IMR-90 (cell line): ENCODE measurements at regions of chr14 and their contacts with region 1.

Region 1: DNA sequence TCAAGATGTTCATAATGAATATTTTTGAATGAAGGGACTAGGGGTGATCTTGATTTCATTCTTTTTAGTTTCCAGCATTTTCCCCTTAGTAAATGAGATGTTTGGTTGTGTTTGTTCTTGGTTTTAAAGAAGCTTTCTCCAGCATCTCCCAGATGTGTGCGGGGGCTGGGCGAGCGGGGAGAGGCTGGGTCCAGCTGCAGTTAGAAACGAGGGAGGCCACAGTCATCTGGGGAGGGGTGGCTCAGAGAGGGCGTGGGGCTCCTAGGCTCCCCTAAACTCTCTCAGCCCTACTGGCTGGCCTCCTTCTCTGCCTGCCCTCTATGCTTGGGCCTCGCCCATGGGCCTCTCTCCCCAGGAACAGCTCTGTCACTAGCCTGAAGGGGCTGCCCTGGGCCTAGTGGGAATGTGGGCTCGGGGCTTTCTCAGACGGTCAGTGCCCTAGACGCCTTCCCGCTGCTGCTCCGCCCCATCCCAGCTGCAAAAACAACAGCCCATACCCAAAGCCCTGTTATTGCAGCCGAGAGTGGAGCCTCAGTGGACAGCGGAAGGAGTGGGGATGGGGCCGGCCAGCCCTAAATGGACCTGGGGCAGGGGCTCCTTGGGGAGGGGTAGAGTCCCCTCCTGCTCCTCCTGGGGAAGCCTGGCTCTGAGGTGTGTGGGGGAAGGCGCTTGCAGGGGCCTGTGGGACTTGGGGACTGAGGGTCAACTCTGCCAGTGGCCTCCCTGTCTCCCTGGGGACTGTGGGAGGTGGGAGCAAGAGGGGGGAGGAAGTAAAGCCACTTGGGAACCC is 18.3 kb upstream of the EIF2B2 start:
- DNase-seq: no peak
- ATAC-seq: no peak
- H3K4me3 ChIP-seq: no peak overlapping the region
- H3K27ac ChIP-seq: no peak overlapping the region
- H3K4me1 ChIP-seq: peaks cover 17% of the 10 kb centered on the region
- H3K27me3 ChIP-seq: no peaks in the 10 kb centered on the region
- CTCF ChIP-seq: no peak
- POLR2A ChIP-seq: no peak
- RAD21 ChIP-seq: no peak

Region 2: DNA sequence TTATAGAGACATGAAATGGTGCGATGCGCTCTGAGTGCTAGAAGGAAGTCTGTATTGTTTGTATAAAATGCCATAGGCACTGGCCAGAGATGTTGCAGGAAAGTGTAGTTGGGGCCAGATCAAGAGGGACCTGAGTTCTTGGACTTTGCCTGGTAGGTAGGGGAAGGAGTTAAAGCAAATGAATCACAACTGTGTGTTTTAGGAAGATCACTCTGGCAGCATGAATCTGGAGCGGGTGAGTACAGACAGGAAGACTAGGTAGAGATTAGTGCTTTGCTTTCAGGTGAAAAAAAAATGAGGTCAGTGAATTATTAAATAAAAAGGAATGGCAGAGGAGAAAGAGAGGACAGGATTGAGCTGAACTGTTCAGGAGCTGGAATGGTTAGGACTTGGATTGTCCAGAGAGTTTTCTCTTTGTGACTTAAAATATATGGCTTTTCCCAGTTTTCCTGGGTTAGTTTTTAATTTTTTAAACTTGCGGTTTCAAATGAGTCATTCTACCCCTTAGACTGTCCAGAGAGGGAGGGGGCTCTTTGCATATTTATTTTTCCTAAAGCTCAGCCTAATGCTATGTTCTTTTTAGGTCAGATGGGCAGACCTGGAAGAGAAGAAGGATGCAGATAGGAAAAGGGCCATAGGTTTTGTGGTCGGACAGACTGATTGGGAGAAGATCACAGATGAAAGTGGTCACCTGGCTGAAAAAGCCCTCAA is 149.6 kb before region 1 on chr14:
- CTCF ChIA-PET with region 1: no interaction called
- POLR2A ChIA-PET with region 1: no interaction called
- dilution Hi-C with region 1: no loop called
- in situ Hi-C with region 1: no loop called
- intact Hi-C with region 1: no loop called
- DNase-seq: peak; percentile 65
- ATAC-seq: peak; percentile 81
- H3K4me3 ChIP-seq: no peak overlapping the region
- H3K27ac ChIP-seq: peak overlapping the region; percentile 86; the same call in 1 of the 2 replicates
- H3K4me1 ChIP-seq: peaks cover 18% of the 10 kb centered on the region
- H3K27me3 ChIP-seq: no peaks in the 10 kb centered on the region
- CTCF ChIP-seq: no peak
- POLR2A ChIP-seq: no peak
- RAD21 ChIP-seq: no peak

Region 3: GRCh38 chr14:74852927-74853514 is 131.4 kb before region 1 on chr14:
- CTCF ChIA-PET with region 1: no interaction called
- POLR2A ChIA-PET with region 1: no interaction called
- dilution Hi-C with region 1: no loop called
- in situ Hi-C with region 1: no loop called
- intact Hi-C with region 1: no loop called
- DNase-seq: peak; percentile 84
- ATAC-seq: peak; percentile 84
- H3K4me3 ChIP-seq: no peak overlapping the region
- H3K27ac ChIP-seq: peak overlapping the region; percentile 98; the same call in 1 of the 2 replicates
- H3K4me1 ChIP-seq: peaks cover 26% of the 10 kb centered on the region
- H3K27me3 ChIP-seq: no peaks in the 10 kb centered on the region
- CTCF ChIP-seq: no peak
- POLR2A ChIP-seq: no peak
- RAD21 ChIP-seq: no peak

Region 4: GRCh38 chr14:75249251-75249957 is 265.0 kb after region 1 on chr14:
- CTCF ChIA-PET with region 1: interaction called, 10 read pairs
- POLR2A ChIA-PET with region 1: no interaction called
- dilution Hi-C with region 1: no loop called
- in situ Hi-C with region 1: no loop called
- intact Hi-C with region 1: no loop called
- DNase-seq: no peak
- ATAC-seq: no peak
- H3K4me3 ChIP-seq: no peak overlapping the region
- H3K27ac ChIP-seq: no peak overlapping the region
- H3K4me1 ChIP-seq: no peaks in the 10 kb centered on the region
- H3K27me3 ChIP-seq: peaks cover 10% of the 10 kb centered on the region; the same call in 1 of the 2 replicates
- CTCF ChIP-seq: no peak
- POLR2A ChIP-seq: no peak
- RAD21 ChIP-seq: no peak